Sigmoid colon (tissue), 7 donors: ENCODE measurements at regions of chr11 and their contacts with region 1.

Region 1: DNA sequence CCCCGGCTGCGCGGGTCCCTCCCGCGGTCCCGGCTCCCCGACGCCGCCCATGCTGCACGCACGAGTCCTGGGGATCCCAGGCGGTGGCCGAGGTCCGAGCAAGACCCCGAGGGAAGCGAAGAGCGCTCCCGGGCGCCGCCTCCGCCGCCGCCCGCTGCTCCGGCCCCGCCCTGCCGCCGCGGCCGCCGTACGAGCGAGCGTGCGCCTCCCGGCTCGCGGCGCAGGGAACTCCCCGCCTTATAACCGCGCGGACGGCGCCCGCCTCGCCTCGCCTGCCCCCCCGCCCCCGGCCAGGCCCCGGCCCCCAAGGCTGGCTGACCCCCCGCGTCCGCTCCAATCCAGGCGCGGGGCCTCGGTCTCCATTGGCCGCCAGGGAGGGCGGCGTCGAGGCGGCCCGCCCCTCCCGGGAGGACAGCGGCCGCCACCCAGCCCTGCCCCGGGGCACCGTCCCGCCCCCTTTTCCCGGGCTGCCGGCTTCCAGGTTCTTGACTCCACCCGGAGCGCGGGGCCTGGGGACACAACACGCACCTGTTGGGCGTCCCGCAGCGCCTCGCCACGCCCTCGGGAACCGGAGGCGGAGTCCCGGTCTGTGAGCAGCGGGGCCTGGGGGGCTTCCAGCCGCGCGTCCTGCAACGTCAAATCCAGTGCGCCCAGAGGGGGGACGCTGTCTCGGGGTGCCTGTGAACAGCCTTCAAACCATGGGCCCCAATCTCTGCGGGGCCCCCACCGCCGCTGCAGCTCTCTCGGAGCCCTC is at the start of gene FADS3:
- DNase-seq: peak; percentile 94
- H3K4me3 ChIP-seq: peak within 1 kb of the TSS; percentile 75 to 94 (median 84)
- H3K27ac ChIP-seq: peak within 1 kb of the TSS; percentile 85 to 96 (median 90)
- H3K4me1 ChIP-seq: peaks cover 0 to 46% (median 33%) of the 10 kb centered on the region in 4 donors
- H3K27me3 ChIP-seq: no peaks in the 10 kb centered on the region
- CTCF ChIP-seq: no peak
- EP300 ChIP-seq: no peak
- POLR2A ChIP-seq: no peak
- total RNA-seq, gene FADS3: 21.1 to 57.9 (median 37.5) TPM

Region 2: GRCh38 chr11:61816736-61817455 is 74.6 kb before region 1 on chr11 and contains the start of gene FADS1:
- intact Hi-C with region 1: loop called (anchors 5 kb)
- DNase-seq: peak; percentile 96
- H3K4me3 ChIP-seq: peak within 1 kb of the TSS; percentile 53 to 77 (median 65)
- H3K27ac ChIP-seq: peak within 1 kb of the TSS; percentile 90 to 95 (median 94)
- H3K4me1 ChIP-seq: peaks cover 0 to 22% (median 16%) of the 10 kb centered on the region in 4 donors
- H3K27me3 ChIP-seq: no peaks in the 10 kb centered on the region
- CTCF ChIP-seq: peak in 2 of 4 experiments; percentile 32 to 48
- EP300 ChIP-seq: peak in 2 of 4 donors; percentile 25 to 29
- POLR2A ChIP-seq: peak in 1 of 2 donors; percentile 6
- total RNA-seq, gene FADS1: 11.8 to 17.7 (median 16.6) TPM

Region 3: GRCh38 chr11:61947486-61948210 is 56.1 kb after region 1 on chr11:
- intact Hi-C with region 1: no loop called
- DNase-seq: peak; percentile 95
- H3K4me3 ChIP-seq: no peak overlapping the region
- H3K27ac ChIP-seq: no peak overlapping the region
- H3K4me1 ChIP-seq: peaks cover 0 to 31% (median 22%) of the 10 kb centered on the region in 4 donors
- H3K27me3 ChIP-seq: no peaks in the 10 kb centered on the region
- CTCF ChIP-seq: peak; percentile 78 to 92 (median 86)
- EP300 ChIP-seq: no peak
- POLR2A ChIP-seq: no peak

Region 4: DNA sequence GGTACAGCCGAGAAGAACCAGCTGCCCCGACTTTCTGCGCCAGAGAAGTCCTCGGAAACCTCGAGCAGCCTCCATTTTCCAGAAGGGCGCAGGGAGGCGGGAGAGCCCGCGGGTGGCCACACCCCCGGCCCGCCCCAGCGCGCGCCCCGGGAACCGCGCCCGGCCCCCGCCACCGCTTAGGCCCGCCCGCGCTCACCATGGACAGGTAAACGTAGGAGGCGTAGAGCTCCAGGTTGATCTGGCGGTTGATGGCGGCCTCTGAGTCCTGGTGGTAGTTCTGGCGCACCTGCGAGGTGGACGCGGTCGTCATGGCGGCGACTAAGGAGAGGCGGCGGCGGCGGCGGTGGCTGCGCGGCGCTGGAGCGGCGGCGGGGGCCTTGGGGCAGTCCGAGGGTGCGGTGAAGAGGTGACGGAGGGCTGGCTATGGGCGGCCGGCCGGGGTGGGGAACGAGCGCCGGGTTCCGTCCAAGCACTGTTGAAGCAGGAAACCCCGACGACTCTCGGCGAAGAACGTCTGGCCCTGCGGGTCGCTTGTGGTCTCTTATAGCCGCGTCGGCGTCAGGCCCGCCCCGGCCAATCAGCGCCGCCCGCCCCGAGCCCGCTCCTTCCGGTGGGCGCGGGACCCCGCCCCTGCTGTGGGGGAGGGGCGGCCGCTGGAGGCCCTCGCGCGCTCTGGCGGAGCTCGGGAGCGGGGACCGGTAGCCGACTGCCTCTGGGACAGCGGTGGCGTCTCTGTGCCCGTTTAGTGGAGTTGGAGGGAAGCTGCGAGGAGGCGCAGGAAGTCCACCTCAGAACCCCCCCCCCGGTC is 75.8 kb after region 1 on chr11 and contains the start of gene FTH1:
- intact Hi-C with region 1: loop called (anchors 5 kb)
- DNase-seq: peak; percentile 97
- H3K4me3 ChIP-seq: peak within 1 kb of the TSS; percentile 83 to 97 (median 90)
- H3K27ac ChIP-seq: peak within 1 kb of the TSS; percentile 99 to 100 (median 100)
- H3K4me1 ChIP-seq: peaks cover 0 to 77% (median 76%) of the 10 kb centered on the region in 4 donors
- H3K27me3 ChIP-seq: no peaks in the 10 kb centered on the region
- CTCF ChIP-seq: no peak
- EP300 ChIP-seq: peak in 1 of 4 donors; percentile 32
- POLR2A ChIP-seq: peak; percentile 96 to 97
- total RNA-seq, gene FTH1: 1,709 to 2,375 (median 1,954) TPM